ENCODE measurements at regions of chr14 and their contacts with region 1.

Region 1: DNA sequence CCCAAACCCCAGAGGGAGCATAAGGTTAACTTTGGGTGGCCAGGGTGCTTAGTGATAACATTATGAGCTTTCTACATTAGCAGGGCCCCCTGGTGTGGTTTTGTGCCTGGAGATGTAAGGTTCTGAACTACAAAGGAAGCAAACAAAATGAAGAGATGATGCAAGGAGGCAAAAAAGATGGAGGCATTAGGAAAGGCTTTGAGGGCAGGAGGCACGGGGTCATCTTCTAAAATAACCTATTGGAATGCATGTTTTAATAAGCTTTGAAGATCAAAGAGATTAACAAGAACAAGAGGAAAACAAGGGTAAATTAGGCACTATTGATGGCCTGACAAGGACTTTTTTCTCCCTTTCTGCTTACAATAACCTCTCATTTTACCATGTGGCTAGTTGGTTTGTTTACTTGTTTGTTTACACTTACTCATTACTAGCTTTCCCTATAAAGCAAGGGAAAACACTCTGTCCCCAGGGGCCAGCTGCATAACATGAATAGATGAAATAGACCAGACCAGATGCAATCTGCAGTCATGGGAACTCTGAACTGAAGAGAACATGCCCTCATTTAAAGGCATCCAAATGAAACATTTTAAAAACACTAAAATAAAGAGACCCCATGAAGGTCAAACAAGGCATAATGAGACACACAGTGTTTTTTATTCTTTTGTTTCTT is 390.3 kb downstream of the DIO2 start:
- DNase-seq: no peak
- ATAC-seq: no peak
- H3K4me3 ChIP-seq: no peak overlapping the region
- H3K27ac ChIP-seq: no peak overlapping the region
- H3K4me1 ChIP-seq: peaks cover 10% of the 10 kb centered on the region; the same call in 1 of the 3 replicates
- CTCF ChIP-seq: no peak
- EP300 ChIP-seq: no peak
- POLR2A ChIP-seq: no peak
- RAD21 ChIP-seq: no peak

Region 2: DNA sequence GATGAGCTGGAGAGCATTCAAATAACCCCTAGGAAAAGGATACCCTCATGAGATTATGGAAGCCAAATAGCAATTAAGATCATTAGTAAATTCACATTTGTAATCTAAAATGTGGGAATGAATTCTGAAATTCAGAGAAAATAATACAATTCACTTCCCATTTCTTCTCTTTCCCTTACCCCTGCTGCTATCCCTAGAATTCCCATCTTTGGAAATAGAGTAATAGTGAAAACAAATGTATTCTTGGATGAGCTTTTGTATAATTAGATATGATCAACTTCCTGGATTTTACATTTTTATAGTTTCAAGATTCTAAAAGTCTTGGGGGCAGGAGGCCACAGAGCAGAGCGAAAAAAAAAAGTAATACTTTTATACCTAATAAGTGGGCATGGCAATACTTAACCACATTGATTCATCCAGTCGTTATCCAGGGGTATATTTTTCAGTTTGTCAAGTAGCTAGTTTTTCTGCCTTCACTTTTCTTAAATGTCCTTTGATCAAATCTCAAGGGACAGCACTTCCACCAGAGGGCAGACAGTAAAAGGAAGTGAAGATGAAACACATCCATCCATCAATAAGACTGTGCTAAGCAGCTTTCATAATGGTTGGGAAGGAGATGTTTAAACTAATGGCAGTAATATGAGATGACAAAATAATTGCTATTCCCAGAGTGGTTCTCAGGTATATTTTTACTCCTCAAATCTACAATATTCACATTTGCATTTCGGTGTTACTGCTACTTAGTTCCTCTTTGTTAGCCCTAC is 11.0 kb before region 1 on chr14:
- CTCF ChIA-PET with region 1: interaction called, 11 read pairs
- POLR2A ChIA-PET with region 1: no interaction called
- DNase-seq: peak; percentile 5 to 55
- ATAC-seq: peak; percentile 57 to 66; a peak in 4 of 6 replicates
- H3K4me3 ChIP-seq: no peak overlapping the region
- H3K27ac ChIP-seq: no peak overlapping the region
- H3K4me1 ChIP-seq: no peaks in the 10 kb centered on the region
- CTCF ChIP-seq: peak; percentile 44
- EP300 ChIP-seq: no peak
- POLR2A ChIP-seq: no peak
- RAD21 ChIP-seq: peak; percentile 47 to 59; a peak in 4 of 5 replicates

Measured in A549 (cell line).